Activated B cell treated with CpG ODN at 0.5 μM for 24 hours (primary cell): ENCODE measurements at regions of chr6 and their contacts with region 1.

Region 1: DNA sequence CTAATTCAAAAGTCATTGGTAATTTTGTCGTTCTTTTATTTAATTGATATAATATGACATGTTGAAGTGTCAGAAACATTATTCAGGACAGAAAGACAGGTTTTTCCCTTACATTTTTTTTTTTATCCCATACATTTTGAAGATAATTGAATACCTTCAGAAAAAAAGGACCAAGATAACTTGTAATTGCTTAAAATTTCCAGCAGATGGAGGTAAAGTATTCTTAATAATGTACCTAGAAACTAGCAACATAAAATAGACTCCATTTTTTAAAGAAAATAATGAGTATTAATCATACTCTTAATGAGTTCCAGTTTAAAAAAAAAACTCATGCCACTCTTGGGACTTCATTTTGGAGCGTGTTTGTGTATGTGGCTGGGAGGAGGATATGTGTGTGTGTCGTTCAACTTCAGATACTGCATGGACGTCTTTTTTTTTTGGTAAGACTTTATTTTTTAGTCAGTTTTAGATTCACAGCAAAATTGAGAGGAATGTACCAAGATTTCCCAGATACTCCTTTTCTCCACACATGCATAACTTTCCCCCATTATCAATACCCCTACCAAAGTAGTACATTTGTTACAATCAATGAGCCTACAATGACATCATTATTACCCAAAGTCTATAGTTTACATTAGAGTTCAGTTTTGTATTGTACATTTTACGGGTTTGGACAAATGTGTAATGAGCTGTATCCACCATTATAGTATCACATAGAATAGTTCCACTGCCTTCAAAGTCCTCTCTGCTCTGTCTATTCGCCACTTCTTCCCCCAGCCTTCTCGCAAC is 79.4 kb downstream of the ROS1 start:
- DNase-seq: no peak
- ATAC-seq: no peak
- H3K4me3 Mint-ChIP-seq: no peak overlapping the region
- H3K27ac Mint-ChIP-seq: no peak overlapping the region
- H3K4me1 Mint-ChIP-seq: no peaks in the 10 kb centered on the region
- H3K27me3 Mint-ChIP-seq: peaks cover 1% of the 10 kb centered on the region
- CTCF ChIP-seq: no peak

Region 2: GRCh38 chr6:117624869-117625481 is 278.6 kb after region 1 on chr6:
- CTCF ChIA-PET with region 1: no interaction called
- POLR2A ChIA-PET with region 1: no interaction called
- intact Hi-C with region 1: no loop called
- DNase-seq: no peak
- ATAC-seq: no peak
- H3K4me3 Mint-ChIP-seq: no peak overlapping the region
- H3K27ac Mint-ChIP-seq: no peak overlapping the region
- H3K4me1 Mint-ChIP-seq: no peaks in the 10 kb centered on the region
- H3K27me3 Mint-ChIP-seq: peaks cover 9% of the 10 kb centered on the region
- CTCF ChIP-seq: no peak

Region 3: DNA sequence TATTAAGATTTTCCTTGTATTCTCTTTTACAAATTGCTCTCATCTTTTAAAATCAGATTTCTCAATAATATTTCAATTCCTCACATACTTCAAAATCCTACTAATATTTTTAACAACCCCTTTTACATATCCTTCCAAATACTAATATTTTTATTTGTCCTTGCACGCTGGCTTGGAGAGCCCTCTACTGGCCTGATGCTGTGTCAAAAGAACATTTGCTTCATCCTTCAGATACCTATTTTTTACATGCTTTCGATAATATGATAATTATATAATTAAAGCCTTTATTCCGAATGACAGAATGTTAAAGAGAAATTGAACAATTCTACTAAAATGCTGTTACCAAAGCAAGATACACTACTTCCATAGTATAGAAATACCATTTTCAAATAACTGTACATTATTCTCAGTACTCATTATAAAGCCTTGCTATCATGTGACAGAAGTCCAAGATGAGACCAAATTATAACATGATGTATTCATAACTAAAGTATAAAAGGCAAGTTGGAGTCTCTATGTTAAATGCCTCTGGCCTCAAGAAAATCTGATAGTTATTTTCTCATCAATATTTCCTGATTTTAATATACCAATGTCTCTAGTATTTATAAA is 1162.8 kb after region 1 on chr6:
- CTCF ChIA-PET with region 1: no interaction called
- POLR2A ChIA-PET with region 1: no interaction called
- intact Hi-C with region 1: loop called (anchors 5 kb)
- DNase-seq: no peak
- ATAC-seq: no peak
- H3K4me3 Mint-ChIP-seq: no peak overlapping the region
- H3K27ac Mint-ChIP-seq: no peak overlapping the region
- H3K4me1 Mint-ChIP-seq: no peaks in the 10 kb centered on the region
- H3K27me3 Mint-ChIP-seq: no peaks in the 10 kb centered on the region
- CTCF ChIP-seq: no peak

Region 4: GRCh38 chr6:118551063-118552053 is 1205.0 kb after region 1 on chr6:
- CTCF ChIA-PET with region 1: no interaction called
- POLR2A ChIA-PET with region 1: no interaction called
- intact Hi-C with region 1: loop called (anchors 1 kb)
- DNase-seq: no peak
- ATAC-seq: peak; percentile 57
- H3K4me3 Mint-ChIP-seq: no peak overlapping the region
- H3K27ac Mint-ChIP-seq: no peak overlapping the region
- H3K4me1 Mint-ChIP-seq: no peaks in the 10 kb centered on the region
- H3K27me3 Mint-ChIP-seq: no peaks in the 10 kb centered on the region
- CTCF ChIP-seq: no peak

Region 5: DNA sequence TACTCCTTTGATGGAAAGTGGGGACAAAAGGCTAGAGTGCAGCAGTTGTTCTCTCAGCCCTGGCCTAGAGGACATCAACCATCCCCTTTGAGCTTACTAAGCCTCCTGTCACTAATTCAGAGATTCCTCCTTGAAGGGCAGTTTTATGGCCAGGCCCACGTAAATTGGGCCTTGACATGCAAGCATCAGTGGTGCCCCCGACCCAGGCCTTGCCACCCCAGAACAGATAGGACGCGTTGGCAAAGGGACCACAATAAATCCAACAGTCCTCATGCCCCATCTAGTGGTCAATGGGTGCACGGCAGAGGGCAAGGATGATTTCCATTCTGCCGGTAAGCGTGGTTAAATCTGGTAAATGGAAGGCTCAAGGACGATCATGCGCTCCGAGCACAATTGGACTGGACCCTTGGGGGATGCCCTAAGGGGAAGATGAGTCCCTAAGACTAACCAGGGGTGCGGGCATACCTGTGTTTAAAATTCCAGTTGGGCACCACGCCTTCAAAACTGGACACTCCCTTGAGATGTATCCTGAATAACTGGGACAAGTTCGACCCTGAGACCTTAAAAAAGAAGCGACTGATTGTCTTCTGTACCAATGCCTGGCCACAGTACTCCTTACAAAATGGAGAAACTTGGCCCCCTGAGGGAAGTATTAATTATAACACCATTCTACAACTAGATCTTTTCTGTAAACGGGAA is 1272.5 kb after region 1 on chr6:
- CTCF ChIA-PET with region 1: no interaction called
- POLR2A ChIA-PET with region 1: no interaction called
- intact Hi-C with region 1: loop called (anchors 5 kb)
- DNase-seq: peak; percentile 41
- ATAC-seq: peak; percentile 93
- H3K4me3 Mint-ChIP-seq: no peak overlapping the region
- H3K27ac Mint-ChIP-seq: no peak overlapping the region
- H3K4me1 Mint-ChIP-seq: peaks cover 19% of the 10 kb centered on the region
- H3K27me3 Mint-ChIP-seq: no peaks in the 10 kb centered on the region
- CTCF ChIP-seq: no peak